Heart right ventricle (tissue), 16 donors: ENCODE measurements at regions of chr9 and their contacts with region 1.

Region 1: GRCh38 chr9:120928483-120929228 is 2.1 kb upstream of the TRAF1 start:
- DNase-seq: peak; percentile 73 to 84
- ATAC-seq: peak; percentile 87 to 96 (median 90)
- H3K4me3 ChIP-seq: peak overlapping the region; percentile 52 to 76 (median 72)
- H3K27ac ChIP-seq: peak overlapping the region; percentile 76 to 95 (median 92)
- H3K4me1 ChIP-seq: peaks cover 5 to 83% (median 35%) of the 10 kb centered on the region in 9 donors
- H3K27me3 ChIP-seq: no peaks in the 10 kb centered on the region
- CTCF ChIP-seq: peak in 7 of 9 donors; percentile 14 to 46 (median 32)

Region 2: GRCh38 chr9:120868676-120869359 is 59.8 kb before region 1 on chr9:
- intact Hi-C with region 1: loop called in 2 of 10 experiments (anchors 2 to 10 kb)
- DNase-seq: peak; percentile 95 to 96
- ATAC-seq: peak; percentile 94 to 97 (median 95)
- H3K4me3 ChIP-seq: peak overlapping the region; percentile 43 to 77 (median 60)
- H3K27ac ChIP-seq: peak overlapping the region; percentile 1 to 89 (median 82)
- H3K4me1 ChIP-seq: peaks cover 0 to 18% (median 9%) of the 10 kb centered on the region in 9 donors
- H3K27me3 ChIP-seq: no peaks in the 10 kb centered on the region
- CTCF ChIP-seq: peak in 7 of 9 donors; percentile 26 to 75 (median 62)